Activated CD4-positive, alpha-beta T cell treated with anti-CD3 and anti-CD28 coated beads for 36 hours (primary cell): ENCODE measurements at regions of chr21 and their contacts with region 1.

Region 1: GRCh38 chr21:21163904-21164303 is 165.7 kb downstream of the NCAM2 start:
- DNase-seq: peak; percentile 58
- ATAC-seq: no peak
- H3K4me3 Mint-ChIP-seq: no peak overlapping the region
- H3K27ac Mint-ChIP-seq: no peak overlapping the region
- H3K4me1 Mint-ChIP-seq: no peaks in the 10 kb centered on the region
- H3K27me3 Mint-ChIP-seq: no peaks in the 10 kb centered on the region

Region 2: GRCh38 chr21:21373969-21374368 is 210.1 kb after region 1 on chr21:
- CTCF ChIA-PET with region 1: no interaction called
- POLR2A ChIA-PET with region 1: no interaction called
- intact Hi-C with region 1: loop called in 1 of 2 experiments (anchors 10 kb)
- DNase-seq: no peak
- ATAC-seq: no peak
- H3K4me3 Mint-ChIP-seq: no peak overlapping the region
- H3K27ac Mint-ChIP-seq: no peak overlapping the region
- H3K4me1 Mint-ChIP-seq: no peaks in the 10 kb centered on the region
- H3K27me3 Mint-ChIP-seq: no peaks in the 10 kb centered on the region

Region 3: DNA sequence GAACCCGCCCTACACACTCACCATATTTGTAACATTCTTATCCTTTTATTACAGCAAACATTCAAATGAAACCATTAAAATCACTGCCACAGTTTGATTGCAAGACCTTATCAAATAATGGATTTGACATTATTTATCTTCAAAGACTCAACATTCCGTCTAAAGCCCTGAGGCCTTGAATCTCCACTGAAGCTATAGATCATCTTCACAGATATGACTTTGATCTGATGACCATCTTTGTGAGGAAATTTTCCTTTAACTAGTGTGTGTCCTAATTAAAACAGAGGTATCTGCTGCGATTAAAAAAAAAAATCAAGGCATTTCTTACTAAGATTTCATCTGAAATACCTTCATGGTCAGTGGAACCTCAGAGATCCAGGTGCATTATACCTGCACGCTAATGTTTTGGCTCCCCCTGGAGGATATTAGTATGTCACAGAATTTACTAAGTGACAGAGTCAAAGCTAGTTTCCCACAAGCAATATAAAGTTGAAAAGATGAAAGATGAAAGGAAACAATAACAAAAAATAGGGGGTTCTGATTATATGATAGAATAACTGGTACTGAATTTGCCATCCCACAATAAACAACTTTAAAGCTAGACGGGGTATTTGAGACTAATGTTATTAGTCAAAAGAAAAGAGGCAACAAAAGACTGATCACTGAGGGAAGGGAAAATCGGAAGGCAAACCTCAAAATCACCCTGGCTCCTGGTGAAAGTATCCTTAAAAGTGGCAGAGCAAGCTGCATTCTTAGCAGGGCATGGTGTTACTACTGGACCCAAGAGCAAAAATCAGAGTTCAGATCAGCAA is 757.7 kb after region 1 on chr21:
- CTCF ChIA-PET with region 1: no interaction called
- POLR2A ChIA-PET with region 1: no interaction called
- intact Hi-C with region 1: loop called (anchors 1 to 5 kb)
- DNase-seq: no peak
- ATAC-seq: no peak
- H3K4me3 Mint-ChIP-seq: no peak overlapping the region
- H3K27ac Mint-ChIP-seq: no peak overlapping the region
- H3K4me1 Mint-ChIP-seq: no peaks in the 10 kb centered on the region
- H3K27me3 Mint-ChIP-seq: peaks cover 6% of the 10 kb centered on the region

Region 4: DNA sequence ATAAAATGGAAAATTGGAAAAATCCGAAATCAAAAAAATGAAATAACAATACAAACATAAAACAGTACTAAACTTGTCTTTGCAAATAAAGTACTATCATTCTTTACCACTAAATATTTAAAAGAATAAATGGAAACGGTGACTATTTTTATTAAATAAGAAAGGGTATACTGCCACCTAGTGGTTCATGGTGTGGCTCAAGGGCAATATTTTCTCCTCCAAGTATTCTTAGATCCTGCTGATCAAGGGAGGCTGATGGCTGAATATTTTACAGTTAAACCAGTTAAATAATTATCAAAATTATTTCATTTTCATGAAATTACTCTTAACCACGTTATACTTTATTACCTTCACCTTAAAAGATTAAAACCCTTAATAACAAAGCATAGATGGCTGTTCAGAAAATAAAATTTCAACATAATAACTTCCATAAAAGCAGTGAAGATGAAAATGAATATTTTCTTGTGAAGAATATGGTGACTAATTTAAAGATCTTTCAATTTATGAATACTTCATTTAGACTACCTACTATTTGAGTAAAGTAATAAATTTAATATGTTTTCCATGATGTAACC is 1628.2 kb after region 1 on chr21:
- CTCF ChIA-PET with region 1: interaction called, 4 read pairs
- POLR2A ChIA-PET with region 1: no interaction called
- intact Hi-C with region 1: loop called (anchors 1 kb)
- DNase-seq: peak; percentile 30
- ATAC-seq: no peak
- H3K4me3 Mint-ChIP-seq: no peak overlapping the region
- H3K27ac Mint-ChIP-seq: no peak overlapping the region
- H3K4me1 Mint-ChIP-seq: no peaks in the 10 kb centered on the region
- H3K27me3 Mint-ChIP-seq: no peaks in the 10 kb centered on the region